ENCODE measurements at regions of chr18 and their contacts with region 1.

Region 1: DNA sequence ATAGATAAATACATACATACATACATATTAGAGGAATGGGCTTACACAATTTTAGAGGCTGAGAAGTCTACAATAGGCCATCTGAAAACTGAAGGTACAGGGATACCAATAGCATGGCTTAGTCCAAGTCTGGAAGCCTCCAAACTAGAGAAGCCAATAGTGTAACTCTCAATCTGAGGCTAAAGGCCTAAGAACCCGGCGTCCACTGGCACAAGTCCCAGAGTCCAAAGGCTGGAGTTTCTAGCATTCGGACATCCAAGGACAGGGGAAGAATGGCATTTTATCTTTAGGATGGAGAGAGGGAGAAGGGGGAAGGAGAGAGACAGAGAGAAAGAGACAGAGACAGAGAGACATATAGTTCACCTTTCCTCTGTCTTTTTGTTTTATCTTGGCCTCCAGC is 63.7 kb upstream of the SYT4 start:
- DNase-seq: no peak
- H3K4me3 ChIP-seq: no peak overlapping the region
- H3K27ac ChIP-seq: no peak overlapping the region
- H3K4me1 ChIP-seq: no peaks in the 10 kb centered on the region
- H3K27me3 ChIP-seq: no peaks in the 10 kb centered on the region
- CTCF ChIP-seq: no peak
- POLR2A ChIP-seq: no peak

Region 2: DNA sequence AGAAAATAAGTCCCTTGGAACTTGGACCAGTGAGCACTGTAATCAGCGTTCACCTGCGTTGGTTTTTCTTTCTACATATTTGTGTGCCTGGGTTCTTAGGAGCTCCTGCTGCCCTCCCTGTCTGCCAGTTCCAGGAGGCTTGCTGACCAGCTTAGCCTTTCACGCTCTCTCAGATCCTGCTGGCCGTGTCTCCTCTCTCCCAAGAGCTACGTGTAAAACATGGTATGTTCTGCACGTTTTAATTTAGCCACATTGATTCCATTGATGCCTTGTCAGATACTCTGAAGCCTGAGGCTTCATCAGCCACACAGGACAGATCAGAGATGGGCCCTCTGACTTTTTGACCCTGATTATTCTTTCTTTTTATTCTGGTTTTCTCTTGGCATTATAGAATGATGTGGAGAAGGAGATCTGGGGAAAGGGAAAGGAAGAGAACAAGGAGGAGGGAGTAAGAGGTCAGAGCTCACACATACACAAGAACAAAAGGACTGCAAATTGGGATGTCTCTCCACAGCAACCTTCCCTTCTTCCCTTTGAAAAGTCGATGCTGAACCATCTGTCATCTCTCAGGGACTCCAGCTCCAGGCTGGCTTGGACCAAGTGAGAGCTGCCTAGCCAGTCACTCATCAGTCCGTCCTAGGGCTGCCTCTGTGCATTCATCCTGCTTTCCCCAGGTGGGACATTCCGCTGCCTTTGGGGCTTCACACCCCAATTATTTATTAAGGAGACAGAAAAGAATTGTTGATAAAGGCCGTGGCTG is 1233.1 kb before region 1 on chr18:
- intact Hi-C with region 1: loop called (anchors 5 kb)
- DNase-seq: no peak
- H3K4me3 ChIP-seq: no peak overlapping the region
- H3K27ac ChIP-seq: no peak overlapping the region
- H3K4me1 ChIP-seq: no peaks in the 10 kb centered on the region
- H3K27me3 ChIP-seq: no peaks in the 10 kb centered on the region
- CTCF ChIP-seq: no peak
- POLR2A ChIP-seq: no peak

Region 3: GRCh38 chr18:42773870-42774269 is 567.1 kb before region 1 on chr18:
- intact Hi-C with region 1: no loop called
- DNase-seq: no peak
- H3K4me3 ChIP-seq: no peak overlapping the region
- H3K27ac ChIP-seq: no peak overlapping the region
- H3K4me1 ChIP-seq: no peaks in the 10 kb centered on the region
- H3K27me3 ChIP-seq: no peaks in the 10 kb centered on the region
- CTCF ChIP-seq: no peak
- POLR2A ChIP-seq: no peak

Region 4: GRCh38 chr18:42959528-42959927 is 381.5 kb before region 1 on chr18:
- intact Hi-C with region 1: no loop called
- DNase-seq: no peak
- H3K4me3 ChIP-seq: no peak overlapping the region
- H3K27ac ChIP-seq: no peak overlapping the region
- H3K4me1 ChIP-seq: no peaks in the 10 kb centered on the region
- H3K27me3 ChIP-seq: no peaks in the 10 kb centered on the region
- CTCF ChIP-seq: no peak
- POLR2A ChIP-seq: no peak

Region 5: GRCh38 chr18:43312891-43313290 is 28.1 kb before region 1 on chr18:
- intact Hi-C with region 1: no loop called
- DNase-seq: no peak
- H3K4me3 ChIP-seq: no peak overlapping the region
- H3K27ac ChIP-seq: no peak overlapping the region
- H3K4me1 ChIP-seq: no peaks in the 10 kb centered on the region
- H3K27me3 ChIP-seq: no peaks in the 10 kb centered on the region
- CTCF ChIP-seq: no peak
- POLR2A ChIP-seq: no peak

Measured in breast epithelium (tissue), 4 donors.